ENCODE measurements at regions of chr20 and their contacts with region 1.

Region 1: GRCh38 chr20:25076731-25077609 is 5.0 kb downstream of the VSX1 start:
- DNase-seq: no peak
- H3K4me3 ChIP-seq: peak overlapping the region; percentile 22
- H3K27ac ChIP-seq: no peak overlapping the region
- H3K4me1 ChIP-seq: peaks cover 1% of the 10 kb centered on the region
- H3K27me3 ChIP-seq: no peaks in the 10 kb centered on the region
- CTCF ChIP-seq: no peak
- EP300 ChIP-seq: no peak
- POLR2A ChIP-seq: no peak

Region 2: GRCh38 chr20:24917797-24918578 is 159.0 kb before region 1 on chr20:
- intact Hi-C with region 1: no loop called
- DNase-seq: peak; percentile 30 to 81 (median 61)
- H3K4me3 ChIP-seq: no peak overlapping the region
- H3K27ac ChIP-seq: no peak overlapping the region
- H3K4me1 ChIP-seq: peaks cover 15% of the 10 kb centered on the region
- H3K27me3 ChIP-seq: no peaks in the 10 kb centered on the region
- CTCF ChIP-seq: peak in 2 of 3 donors; percentile 30 to 65
- EP300 ChIP-seq: no peak
- POLR2A ChIP-seq: no peak

Region 3: GRCh38 chr20:25178563-25179438 is 101.8 kb after region 1 on chr20:
- intact Hi-C with region 1: loop called in 2 of 4 experiments (anchors 10 kb)
- DNase-seq: peak in 2 of 5 donors; percentile 49 to 59
- H3K4me3 ChIP-seq: no peak overlapping the region
- H3K27ac ChIP-seq: no peak overlapping the region
- H3K4me1 ChIP-seq: peaks cover 10% of the 10 kb centered on the region
- H3K27me3 ChIP-seq: no peaks in the 10 kb centered on the region
- CTCF ChIP-seq: peak; percentile 49 to 61 (median 53)
- EP300 ChIP-seq: no peak
- POLR2A ChIP-seq: no peak

Region 4: DNA sequence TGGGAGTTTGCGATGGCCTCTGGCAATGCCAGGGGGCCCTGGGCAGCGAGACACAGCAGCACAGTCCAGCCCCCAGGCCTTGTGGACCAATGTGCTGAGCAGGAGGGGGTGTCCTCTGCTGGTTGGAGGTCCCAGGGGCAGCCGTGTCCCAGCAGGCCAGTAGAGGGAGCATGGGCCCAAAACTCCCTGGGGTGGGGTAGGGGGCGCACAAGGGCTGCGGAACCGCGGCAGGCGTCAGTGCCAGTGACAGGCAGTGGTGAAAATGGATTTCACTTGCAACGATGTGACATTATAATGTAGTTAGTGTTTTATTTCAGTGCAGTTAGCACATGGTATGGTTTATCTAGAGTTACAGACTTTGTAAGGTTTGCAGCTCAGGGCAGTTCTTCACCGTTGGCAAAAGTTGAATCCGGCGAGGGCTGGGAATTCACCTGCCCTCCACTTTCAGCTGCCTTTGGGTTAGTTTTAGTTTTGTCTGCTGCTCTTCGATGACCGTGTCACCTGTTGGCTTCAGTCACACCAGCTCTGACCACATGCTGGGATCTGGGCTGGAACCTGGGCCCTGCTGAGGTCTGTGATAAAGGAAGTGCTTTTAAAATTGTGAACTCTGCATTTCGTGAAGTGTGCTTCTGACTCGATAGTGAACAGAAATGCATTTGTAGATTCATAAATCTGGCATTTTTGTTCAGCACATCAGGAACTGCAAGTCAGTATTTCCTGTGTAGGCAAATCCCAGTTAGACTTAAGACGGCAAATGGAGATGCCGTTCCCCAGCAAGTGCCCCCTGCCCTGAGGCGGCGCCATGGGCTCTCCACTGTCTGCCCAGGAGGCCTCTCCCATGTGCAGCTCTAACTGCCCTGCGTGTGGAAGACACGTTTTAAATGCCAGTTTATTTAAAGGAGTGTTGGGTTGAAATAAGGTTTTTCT is 217.8 kb after region 1 on chr20:
- intact Hi-C with region 1: loop called in 1 of 4 experiments (anchors 5 kb)
- DNase-seq: peak; percentile 50 to 70 (median 62)
- H3K4me3 ChIP-seq: no peak overlapping the region
- H3K27ac ChIP-seq: no peak overlapping the region
- H3K4me1 ChIP-seq: no peaks in the 10 kb centered on the region
- H3K27me3 ChIP-seq: no peaks in the 10 kb centered on the region
- CTCF ChIP-seq: peak; percentile 28 to 72 (median 63)
- EP300 ChIP-seq: no peak
- POLR2A ChIP-seq: no peak

Measured in ovary (tissue), 10 donors.